ENCODE measurements at regions of chr17 and their contacts with region 1.

Region 1: GRCh38 chr17:76726231-76726775 is at the start of gene JMJD6:
- DNase-seq: peak; percentile 87 to 98 (median 92)
- ATAC-seq: peak; percentile 92
- H3K4me3 ChIP-seq: peak within 1 kb of the TSS; percentile 82
- H3K27ac ChIP-seq: peak within 1 kb of the TSS; percentile 96
- H3K4me1 ChIP-seq: peaks cover 17 to 40% of the 10 kb centered on the region in 2 experiments; a peak in 4 of 5 replicates
- H3K27me3 ChIP-seq: no peaks in the 10 kb centered on the region
- CTCF ChIP-seq: no peak
- EP300 ChIP-seq: no peak
- POLR2A ChIP-seq: peak; percentile 82
- RAD21 ChIP-seq: no peak
- polyA plus RNA-seq, gene JMJD6: 2.5 to 10.5 TPM

Region 2: GRCh38 chr17:76567634-76568432 is 158.5 kb before region 1 on chr17:
- CTCF ChIA-PET with region 1: no interaction called
- POLR2A ChIA-PET with region 1: no interaction called
- in situ Hi-C with region 1: no loop called
- intact Hi-C with region 1: no loop called
- DNase-seq: peak in 3 of 4 experiments; percentile 18 to 31 (median 30)
- ATAC-seq: peak; percentile 28
- H3K4me3 ChIP-seq: no peak overlapping the region
- H3K27ac ChIP-seq: peak overlapping the region; percentile 3; the same call in 1 of the 3 replicates
- H3K4me1 ChIP-seq: peaks cover 16 to 37% of the 10 kb centered on the region in 2 experiments; a peak in 4 of 5 replicates
- H3K27me3 ChIP-seq: no peaks in the 10 kb centered on the region
- CTCF ChIP-seq: no peak
- EP300 ChIP-seq: no peak
- POLR2A ChIP-seq: peak; percentile 45; the same call in 1 of the 2 replicates
- RAD21 ChIP-seq: no peak

Region 3: GRCh38 chr17:76597728-76598474 is 128.4 kb before region 1 on chr17:
- CTCF ChIA-PET with region 1: no interaction called
- POLR2A ChIA-PET with region 1: no interaction called
- in situ Hi-C with region 1: no loop called
- intact Hi-C with region 1: no loop called
- DNase-seq: no peak
- ATAC-seq: no peak
- H3K4me3 ChIP-seq: no peak overlapping the region
- H3K27ac ChIP-seq: no peak overlapping the region
- H3K4me1 ChIP-seq: peaks cover 21 to 30% of the 10 kb centered on the region in 2 experiments
- H3K27me3 ChIP-seq: no peaks in the 10 kb centered on the region
- CTCF ChIP-seq: no peak
- EP300 ChIP-seq: no peak
- POLR2A ChIP-seq: no peak
- RAD21 ChIP-seq: no peak

Region 4: DNA sequence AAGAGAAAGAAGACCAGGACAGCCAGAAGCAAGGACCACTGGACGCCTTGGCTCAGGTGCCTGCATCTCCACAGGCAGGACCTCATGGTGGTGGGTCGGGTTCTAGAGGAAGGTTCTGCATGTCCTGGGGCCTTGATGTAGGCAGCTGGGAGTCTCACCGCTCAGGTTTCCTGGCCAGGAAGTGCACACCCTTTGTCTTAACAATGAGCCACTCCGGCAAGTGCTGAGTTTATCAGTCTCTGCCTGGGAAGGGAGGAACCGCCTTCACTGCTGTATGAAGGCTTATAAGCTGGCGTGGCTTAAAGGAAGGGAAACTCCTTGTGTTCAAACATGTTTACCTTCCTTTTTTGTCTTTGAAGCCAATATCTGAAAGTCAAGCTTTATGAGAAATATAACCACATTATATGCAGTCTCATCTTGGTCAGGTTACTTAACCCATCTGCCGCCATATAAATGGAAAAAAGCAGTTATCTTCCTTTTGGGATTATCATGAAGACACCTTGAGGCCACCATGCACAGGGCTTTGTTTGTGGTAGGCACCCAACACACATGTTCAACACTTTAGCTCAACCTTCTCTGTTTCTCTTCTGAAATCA is 82.7 kb before region 1 on chr17 and contains the start of gene ST6GALNAC1:
- CTCF ChIA-PET with region 1: no interaction called
- POLR2A ChIA-PET with region 1: interaction called, 4 read pairs
- in situ Hi-C with region 1: no loop called
- intact Hi-C with region 1: loop called (anchors 5 kb)
- DNase-seq: peak; percentile 70 to 94 (median 78)
- ATAC-seq: peak; percentile 85
- H3K4me3 ChIP-seq: peak within 1 kb of the TSS; percentile 47
- H3K27ac ChIP-seq: peak within 1 kb of the TSS; percentile 94
- H3K4me1 ChIP-seq: peaks cover 22 to 26% of the 10 kb centered on the region in 2 experiments; a peak in 4 of 5 replicates
- H3K27me3 ChIP-seq: no peaks in the 10 kb centered on the region
- CTCF ChIP-seq: no peak
- EP300 ChIP-seq: peak; percentile 61
- POLR2A ChIP-seq: peak; percentile 91
- RAD21 ChIP-seq: no peak
- polyA plus RNA-seq, gene ST6GALNAC1: 50.4 to 62.9 TPM

Region 5: GRCh38 chr17:76714822-76715495 is 11.3 kb before region 1 on chr17:
- CTCF ChIA-PET with region 1: no interaction called
- POLR2A ChIA-PET with region 1: interaction called, 75 read pairs
- in situ Hi-C with region 1: no loop called
- intact Hi-C with region 1: no loop called
- DNase-seq: peak in 3 of 4 experiments; percentile 47 to 79 (median 56)
- ATAC-seq: peak; percentile 36
- H3K4me3 ChIP-seq: no peak overlapping the region
- H3K27ac ChIP-seq: no peak overlapping the region; the same call in 2 of the 3 replicates
- H3K4me1 ChIP-seq: peaks cover 26 to 35% of the 10 kb centered on the region in 2 experiments
- H3K27me3 ChIP-seq: no peaks in the 10 kb centered on the region
- CTCF ChIP-seq: peak; percentile 79 to 84 (median 82)
- EP300 ChIP-seq: no peak
- POLR2A ChIP-seq: no peak
- RAD21 ChIP-seq: peak; percentile 59 to 70

Measured in K562 (cell line).